Activated CD8-positive, alpha-beta T cell treated with anti-CD3 and anti-CD28 coated beads, Interleukin-2, amount 10 ng/mL, durations not matched to agents 7 days and 5 days (primary cell): ENCODE measurements at regions of chr7 and their contacts with region 1.

Region 1: DNA sequence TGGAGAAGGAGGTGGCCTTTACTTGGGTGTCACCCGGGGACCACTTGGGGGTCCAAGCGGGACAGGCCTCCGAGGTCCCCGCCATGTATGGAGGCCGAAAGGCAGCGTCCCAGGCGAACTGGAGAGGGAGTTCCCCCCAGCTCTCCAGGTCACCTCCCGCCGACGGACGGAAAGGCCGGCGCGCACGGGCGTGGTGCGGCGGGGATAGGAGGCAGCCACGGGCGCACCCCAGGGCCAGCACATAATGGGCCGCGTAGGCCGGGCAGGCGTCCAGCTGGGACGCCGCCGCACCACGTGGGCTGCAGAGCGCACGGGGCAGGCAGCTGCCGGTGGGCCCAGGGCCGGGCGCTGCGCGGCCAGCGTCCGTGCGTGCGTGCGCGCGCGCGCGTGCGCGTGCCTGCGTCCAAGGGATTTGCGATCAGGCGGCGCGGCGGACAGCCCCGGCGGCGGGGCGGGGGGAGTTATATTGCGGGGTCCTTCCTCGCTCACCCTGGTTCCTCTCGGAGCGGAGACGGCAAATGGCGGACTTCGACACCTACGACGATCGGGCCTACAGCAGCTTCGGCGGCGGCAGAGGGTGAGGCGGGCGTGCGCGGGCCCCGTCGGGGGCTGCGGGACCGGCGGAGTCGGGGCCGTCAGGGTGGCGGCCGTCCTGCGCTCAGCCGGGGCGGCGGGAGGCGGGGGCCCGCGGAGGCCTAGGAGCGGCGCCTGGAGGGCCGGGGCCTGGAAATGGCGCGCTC is at the start of gene EIF4H:
- DNase-seq: peak; percentile 95
- ATAC-seq: peak; percentile 87
- H3K4me3 Mint-ChIP-seq: peak within 1 kb of the TSS; percentile 87
- H3K27ac Mint-ChIP-seq: peak within 1 kb of the TSS; percentile 90
- H3K4me1 Mint-ChIP-seq: peaks cover 35% of the 10 kb centered on the region
- H3K27me3 Mint-ChIP-seq: no peaks in the 10 kb centered on the region
- total RNA-seq, gene EIF4H: 287 to 302 TPM

Region 2: GRCh38 chr7:74094224-74095101 is 79.6 kb before region 1 on chr7:
- CTCF ChIA-PET with region 1: no interaction called
- POLR2A ChIA-PET with region 1: interaction called, 16 read pairs
- DNase-seq: peak; percentile 88
- ATAC-seq: peak; percentile 80
- H3K4me3 Mint-ChIP-seq: peak overlapping the region; percentile 87
- H3K27ac Mint-ChIP-seq: peak overlapping the region; percentile 91
- H3K4me1 Mint-ChIP-seq: peaks cover 39% of the 10 kb centered on the region
- H3K27me3 Mint-ChIP-seq: no peaks in the 10 kb centered on the region